ENCODE measurements at regions of chr22 and their contacts with region 1.

Region 1: DNA sequence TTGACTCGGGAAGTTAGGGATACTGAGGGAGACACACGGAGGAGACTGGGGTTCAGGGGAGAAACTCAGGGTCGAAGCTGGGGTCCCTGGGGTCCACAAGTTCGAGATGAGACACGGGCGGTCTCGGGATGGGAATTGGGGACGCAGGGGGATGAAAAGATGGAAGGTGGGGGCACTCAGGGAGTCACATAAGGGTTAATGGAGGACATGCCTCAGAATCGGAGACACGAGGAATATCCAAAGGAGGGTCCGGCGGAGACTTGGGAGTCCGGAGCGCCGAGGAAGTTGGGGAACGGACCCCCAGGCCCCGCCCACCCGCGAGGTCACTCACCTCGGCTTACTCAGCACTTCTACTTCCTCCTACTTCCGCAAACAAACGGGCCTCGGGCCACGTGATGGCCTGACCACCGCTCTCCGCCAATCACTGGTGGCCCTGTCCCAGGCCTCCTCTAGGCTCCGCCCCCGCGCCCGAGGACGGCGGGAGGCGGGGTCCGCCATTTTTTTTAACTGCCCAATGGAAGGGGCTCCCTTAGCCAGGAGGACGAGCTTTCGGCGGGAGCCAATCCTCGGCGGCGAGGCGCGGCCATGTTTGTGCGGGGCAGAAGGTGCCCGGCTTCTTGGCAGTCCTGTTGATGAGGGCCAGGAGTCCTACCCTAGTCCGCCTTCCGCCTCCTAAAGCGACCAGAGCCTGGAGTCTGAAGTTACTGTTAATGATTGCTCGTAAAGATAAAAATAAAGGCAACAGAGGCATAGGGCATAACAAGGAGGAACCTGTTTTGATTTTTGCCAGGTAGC is at the start of gene PLA2G6:
- DNase-seq: peak; percentile 86 to 99 (median 90)
- ATAC-seq: peak; percentile 96
- H3K4me3 ChIP-seq: peak within 1 kb of the TSS; percentile 90
- H3K4me3 Mint-ChIP-seq: peak within 1 kb of the TSS; percentile 88 to 100 (median 94)
- H3K27ac ChIP-seq: peak within 1 kb of the TSS; percentile 67
- H3K27ac Mint-ChIP-seq: peak within 1 kb of the TSS; percentile 36 to 94 (median 89)
- H3K4me1 ChIP-seq: peaks cover 16 to 30% of the 10 kb centered on the region in 2 donors
- H3K4me1 Mint-ChIP-seq: peaks cover 34 to 50% (median 42%) of the 10 kb centered on the region in 7 donors
- H3K27me3 ChIP-seq: no peaks in the 10 kb centered on the region
- H3K27me3 Mint-ChIP-seq: peaks cover 0 to 14% (median 0%) of the 10 kb centered on the region in 5 donors
- total RNA-seq, gene PLA2G6: 66.5 to 252 (median 105) TPM

Region 2: DNA sequence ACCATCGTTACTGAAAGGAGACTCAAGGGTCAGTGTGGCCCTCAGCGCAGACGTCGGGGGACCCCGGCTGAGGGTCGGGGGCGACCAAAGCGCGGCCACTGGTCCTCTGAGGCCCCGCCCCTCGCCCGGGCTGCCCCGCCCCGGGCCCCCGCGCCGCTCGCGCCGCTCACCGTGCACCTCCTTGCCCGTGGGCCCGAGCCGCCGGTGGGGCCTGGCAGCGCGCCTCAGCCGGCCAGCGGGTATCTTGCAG is 338.0 kb before region 1 on chr22:
- CTCF ChIA-PET with region 1: no interaction called
- POLR2A ChIA-PET with region 1: no interaction called
- intact Hi-C with region 1: loop called (anchors 5 kb)
- DNase-seq: peak in 1 of 9 donors; percentile 76
- ATAC-seq: peak; percentile 35
- H3K4me3 ChIP-seq: peak overlapping the region; percentile 84
- H3K4me3 Mint-ChIP-seq: peak overlapping the region; percentile 83 to 95 (median 88)
- H3K27ac ChIP-seq: peak overlapping the region; percentile 83
- H3K27ac Mint-ChIP-seq: peak overlapping the region in 8 of 9 donors; percentile 77 to 92 (median 87)
- H3K4me1 ChIP-seq: peaks cover 2 to 14% of the 10 kb centered on the region in 2 donors
- H3K4me1 Mint-ChIP-seq: peaks cover 11 to 29% (median 24%) of the 10 kb centered on the region in 7 donors
- H3K27me3 ChIP-seq: no peaks in the 10 kb centered on the region
- H3K27me3 Mint-ChIP-seq: no peaks in the 10 kb centered on the region

Region 3: DNA sequence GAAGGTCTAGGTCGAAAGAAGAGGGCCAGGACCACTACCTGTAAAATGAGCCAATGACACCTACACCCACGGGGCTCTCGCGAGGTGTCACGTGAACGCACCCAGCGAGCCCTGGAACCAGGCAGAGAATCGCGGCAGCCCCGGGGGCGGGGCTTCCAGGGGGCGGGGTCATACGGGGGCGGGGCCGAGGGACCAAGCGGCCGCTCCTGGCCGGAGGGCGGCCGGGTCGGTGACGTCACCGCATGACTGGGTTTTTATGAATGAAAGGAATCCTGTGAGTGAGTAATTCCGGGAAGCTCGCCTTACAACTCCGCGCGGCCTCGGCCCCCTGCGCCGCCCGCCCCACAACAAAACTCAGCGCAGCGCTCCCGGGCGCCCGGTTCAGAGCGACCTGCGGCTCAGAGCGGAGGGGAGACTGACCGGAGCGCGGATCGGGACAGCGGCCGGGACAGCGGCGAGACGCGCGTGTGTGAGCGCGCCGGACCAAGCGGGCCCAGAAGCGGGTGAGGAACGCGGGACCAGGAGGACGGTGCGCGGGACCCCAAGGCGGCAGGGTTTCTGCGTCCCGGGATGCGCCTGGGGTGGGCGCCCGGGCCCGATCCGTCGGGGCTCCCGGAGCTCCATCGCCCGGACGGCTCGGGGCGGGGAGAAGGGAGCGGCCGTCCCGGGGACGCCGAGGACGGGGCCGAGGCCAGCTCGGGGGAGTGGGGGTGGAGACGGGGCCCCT is 20.2 kb after region 1 on chr22 and contains the start of gene MAFF:
- CTCF ChIA-PET with region 1: interaction called, 3 read pairs
- POLR2A ChIA-PET with region 1: interaction called, 21 read pairs
- intact Hi-C with region 1: loop called (anchors 1 kb)
- DNase-seq: peak; percentile 62 to 88 (median 72)
- ATAC-seq: peak; percentile 87
- H3K4me3 ChIP-seq: peak within 1 kb of the TSS; percentile 77
- H3K4me3 Mint-ChIP-seq: peak within 1 kb of the TSS; percentile 80 to 93 (median 88)
- H3K27ac ChIP-seq: peak within 1 kb of the TSS; percentile 88
- H3K27ac Mint-ChIP-seq: peak within 1 kb of the TSS; percentile 84 to 97 (median 89)
- H3K4me1 ChIP-seq: peaks cover 5 to 25% of the 10 kb centered on the region in 2 donors
- H3K4me1 Mint-ChIP-seq: peaks cover 10 to 33% (median 26%) of the 10 kb centered on the region in 7 donors
- H3K27me3 ChIP-seq: no peaks in the 10 kb centered on the region
- H3K27me3 Mint-ChIP-seq: no peaks in the 10 kb centered on the region
- total RNA-seq, gene MAFF: 4.8 to 72.6 (median 5.5) TPM

Region 4: DNA sequence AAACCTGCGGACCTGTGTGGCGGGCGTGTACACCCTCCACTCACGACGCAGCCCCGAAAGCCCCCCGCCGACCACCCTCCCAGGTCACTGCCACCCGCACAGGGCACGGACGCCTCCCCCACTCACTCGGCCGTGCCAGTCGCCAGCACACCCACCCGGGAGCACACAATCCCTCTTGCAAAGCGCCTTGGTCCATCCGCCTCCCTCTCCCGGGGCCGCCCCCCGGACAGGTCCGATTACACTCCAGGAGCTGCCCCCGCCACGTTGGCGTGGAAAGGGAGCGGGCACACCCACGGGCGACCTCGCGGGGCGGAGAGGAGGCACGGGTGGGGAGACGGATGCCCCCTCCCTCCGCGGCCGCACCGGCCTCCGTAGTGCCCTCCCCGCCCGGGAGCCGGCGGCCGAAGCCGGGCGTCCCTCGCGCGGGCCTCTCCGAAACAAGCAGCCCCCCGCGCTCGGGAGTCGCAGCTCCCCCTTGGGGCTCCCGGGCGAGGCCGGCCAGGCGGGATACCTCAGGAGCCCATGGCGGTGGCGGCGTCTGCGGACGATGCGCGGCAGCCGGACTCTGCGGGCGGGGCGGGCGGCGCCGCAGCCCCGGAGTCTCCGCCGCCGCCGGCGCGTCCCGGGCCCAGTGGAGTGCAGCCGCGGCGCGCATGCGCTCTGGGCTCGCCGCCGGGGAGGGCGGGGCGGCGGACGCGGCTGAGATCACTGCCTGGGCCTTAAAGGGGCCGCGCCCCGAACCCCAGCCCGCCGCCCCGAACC is 90.9 kb after region 1 on chr22 and contains the start of gene TMEM184B:
- CTCF ChIA-PET with region 1: no interaction called
- POLR2A ChIA-PET with region 1: interaction called, 6 read pairs
- intact Hi-C with region 1: loop called (anchors 2 kb)
- DNase-seq: peak; percentile 71 to 93 (median 87)
- ATAC-seq: peak; percentile 98
- H3K4me3 ChIP-seq: peak within 1 kb of the TSS; percentile 77
- H3K4me3 Mint-ChIP-seq: peak within 1 kb of the TSS; percentile 90 to 96 (median 94)
- H3K27ac ChIP-seq: peak within 1 kb of the TSS; percentile 89
- H3K27ac Mint-ChIP-seq: peak within 1 kb of the TSS; percentile 92 to 99 (median 96)
- H3K4me1 ChIP-seq: peaks cover 19 to 29% of the 10 kb centered on the region in 2 donors
- H3K4me1 Mint-ChIP-seq: peaks cover 33 to 62% (median 54%) of the 10 kb centered on the region in 7 donors
- H3K27me3 ChIP-seq: no peaks in the 10 kb centered on the region
- H3K27me3 Mint-ChIP-seq: peaks cover 0 to 8% (median 0%) of the 10 kb centered on the region in 5 donors
- total RNA-seq, gene TMEM184B: 26.9 to 41.3 (median 35.0) TPM

Region 5: GRCh38 chr22:38398609-38399461 is 217.2 kb after region 1 on chr22:
- CTCF ChIA-PET with region 1: no interaction called
- POLR2A ChIA-PET with region 1: no interaction called
- intact Hi-C with region 1: loop called in 1 of 2 experiments (anchors 5 kb)
- DNase-seq: peak; percentile 74 to 91 (median 82)
- ATAC-seq: peak; percentile 93
- H3K4me3 ChIP-seq: peak overlapping the region; percentile 46
- H3K4me3 Mint-ChIP-seq: peak overlapping the region; percentile 78 to 93 (median 85)
- H3K27ac ChIP-seq: peak overlapping the region; percentile 69
- H3K27ac Mint-ChIP-seq: peak overlapping the region in 8 of 9 donors; percentile 55 to 84 (median 76)
- H3K4me1 ChIP-seq: no peaks in the 10 kb centered on the region
- H3K4me1 Mint-ChIP-seq: peaks cover 6 to 41% (median 33%) of the 10 kb centered on the region in 7 donors
- H3K27me3 ChIP-seq: no peaks in the 10 kb centered on the region
- H3K27me3 Mint-ChIP-seq: peaks cover 0 to 30% (median 0%) of the 10 kb centered on the region in 5 donors

Region 6: GRCh38 chr22:39954584-39955055 is 1773.0 kb after region 1 on chr22:
- CTCF ChIA-PET with region 1: no interaction called
- POLR2A ChIA-PET with region 1: no interaction called
- intact Hi-C with region 1: no loop called
- DNase-seq: no peak
- ATAC-seq: no peak
- H3K4me3 ChIP-seq: no peak overlapping the region
- H3K4me3 Mint-ChIP-seq: peak overlapping the region in 5 of 10 donors; percentile 19 to 80 (median 38)
- H3K27ac ChIP-seq: peak overlapping the region; percentile 69
- H3K27ac Mint-ChIP-seq: peak overlapping the region in 5 of 9 donors; percentile 85 to 98 (median 94)
- H3K4me1 ChIP-seq: peaks cover 61 to 86% of the 10 kb centered on the region in 2 donors
- H3K4me1 Mint-ChIP-seq: peaks cover 69 to 97% (median 89%) of the 10 kb centered on the region in 7 donors
- H3K27me3 ChIP-seq: no peaks in the 10 kb centered on the region
- H3K27me3 Mint-ChIP-seq: no peaks in the 10 kb centered on the region

Measured in naive thymus-derived CD4-positive, alpha-beta T cell (primary cell).